ENCODE measurements at regions of chr5 and their contacts with region 1.

Region 1: GRCh38 chr5:138641547-138642298 is 66.5 kb upstream of the HSPA9 start:
- DNase-seq: peak; percentile 69 to 80 (median 78)
- ATAC-seq: peak; percentile 93
- H3K4me3 ChIP-seq: no peak overlapping the region
- H3K27ac ChIP-seq: no peak overlapping the region
- H3K4me1 ChIP-seq: peaks cover 2 to 3% of the 10 kb centered on the region in 2 experiments; a peak in 2 of 5 replicates
- H3K27me3 ChIP-seq: peaks cover 31 to 66% of the 10 kb centered on the region in 2 experiments
- CTCF ChIP-seq: peak; percentile 82 to 94 (median 90)
- EP300 ChIP-seq: peak; percentile 33; the same call in 1 of the 2 replicates
- POLR2A ChIP-seq: no peak
- RAD21 ChIP-seq: peak; percentile 59 to 86

Region 2: DNA sequence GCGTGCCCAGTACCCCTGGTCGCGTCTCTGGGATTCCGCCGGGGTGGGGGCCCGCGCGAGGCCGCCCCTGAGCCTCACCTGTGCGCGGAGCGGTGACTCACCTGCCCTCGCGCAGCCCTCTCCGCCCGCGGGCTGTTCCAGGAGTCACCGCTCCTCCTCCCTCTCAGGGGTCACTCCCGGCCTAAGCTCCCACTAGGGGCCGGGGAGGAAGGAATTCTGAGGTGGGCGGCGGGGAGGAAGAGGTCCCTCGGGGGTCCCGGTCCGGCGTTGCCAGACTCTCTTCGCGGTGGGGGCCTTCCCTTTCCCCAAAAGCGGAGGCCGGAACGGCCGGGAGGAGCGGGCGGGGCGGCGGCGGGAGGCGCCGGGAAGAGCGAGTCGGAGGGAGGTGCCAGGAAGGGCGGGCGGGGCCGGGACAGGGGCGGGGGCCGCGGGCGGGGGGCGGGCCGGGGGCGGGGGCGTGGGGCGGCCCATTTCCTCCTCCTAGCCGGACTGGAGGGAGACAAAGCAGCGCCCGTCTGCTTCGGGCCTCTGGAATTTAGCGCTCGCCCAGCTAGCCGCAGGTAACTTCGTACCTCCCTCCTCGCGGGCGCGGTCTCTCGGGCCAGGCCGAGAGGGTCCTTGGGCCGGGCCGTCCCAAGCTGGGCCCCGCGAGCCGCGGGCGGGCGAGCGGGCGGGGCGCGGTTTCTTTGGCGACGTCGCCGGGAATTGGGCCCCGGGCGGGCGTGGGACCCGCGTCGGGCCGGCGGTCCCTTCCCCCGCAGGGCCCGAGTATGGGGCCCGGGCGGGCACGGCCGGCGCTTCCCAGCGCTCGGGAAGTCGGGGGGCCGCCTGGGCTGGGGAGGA is 111.4 kb after region 1 on chr5 and contains the start of gene CTNNA1:
- CTCF ChIA-PET with region 1: no interaction called
- POLR2A ChIA-PET with region 1: interaction called, 3 read pairs
- in situ Hi-C with region 1: no loop called
- intact Hi-C with region 1: loop called (anchors 5 kb)
- DNase-seq: peak; percentile 79 to 94 (median 93)
- ATAC-seq: peak; percentile 77
- H3K4me3 ChIP-seq: peak within 1 kb of the TSS; percentile 98
- H3K27ac ChIP-seq: peak within 1 kb of the TSS; percentile 91
- H3K4me1 ChIP-seq: peaks cover 15 to 21% of the 10 kb centered on the region in 2 experiments; a peak in 4 of 5 replicates
- H3K27me3 ChIP-seq: no peaks in the 10 kb centered on the region
- CTCF ChIP-seq: no peak
- EP300 ChIP-seq: peak; percentile 95
- POLR2A ChIP-seq: peak; percentile 55
- RAD21 ChIP-seq: no peak
- polyA plus RNA-seq, gene CTNNA1: 72.8 to 76.5 TPM

Region 3: DNA sequence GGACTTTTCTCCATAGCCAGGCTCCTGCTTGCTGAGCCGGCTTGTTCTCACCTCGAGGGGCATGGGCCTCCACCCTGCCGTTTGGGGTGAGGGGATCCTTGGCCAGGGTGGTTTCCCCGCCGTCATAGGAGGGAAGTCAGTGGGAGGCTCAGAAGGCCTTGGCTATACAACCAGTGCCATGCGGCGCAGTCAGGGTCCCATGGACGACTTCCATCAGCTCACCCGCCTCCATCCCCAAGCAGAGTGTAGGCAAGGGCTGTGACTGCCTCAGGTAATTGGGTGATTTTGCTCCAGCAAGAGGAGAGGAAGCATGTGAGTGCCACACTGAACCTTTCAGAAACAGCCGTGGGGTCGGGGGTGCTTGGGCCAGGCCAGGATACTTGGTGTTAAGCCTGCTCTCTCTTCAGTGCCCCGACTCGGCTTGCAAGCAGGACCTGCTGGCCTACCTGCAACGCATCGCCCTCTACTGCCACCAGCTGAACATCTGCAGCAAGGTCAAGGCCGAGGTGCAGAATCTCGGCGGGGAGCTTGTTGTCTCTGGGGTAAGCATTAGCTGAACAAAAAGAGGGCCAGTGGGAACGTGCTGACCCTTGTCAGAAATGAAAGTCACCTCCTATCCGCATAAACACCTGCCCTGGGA is 290.6 kb after region 1 on chr5:
- CTCF ChIA-PET with region 1: no interaction called
- POLR2A ChIA-PET with region 1: no interaction called
- in situ Hi-C with region 1: no loop called
- intact Hi-C with region 1: loop called (anchors 10 kb)
- DNase-seq: no peak
- ATAC-seq: peak; percentile 28
- H3K4me3 ChIP-seq: no peak overlapping the region
- H3K27ac ChIP-seq: no peak overlapping the region; the same call in 2 of the 3 replicates
- H3K4me1 ChIP-seq: peaks cover 0 to 1% of the 10 kb centered on the region in 2 experiments; a peak in 1 of 5 replicates
- H3K27me3 ChIP-seq: no peaks in the 10 kb centered on the region
- CTCF ChIP-seq: peak in 2 of 3 experiments; percentile 21 to 28; a peak in 2 of 6 replicates
- EP300 ChIP-seq: no peak
- POLR2A ChIP-seq: no peak
- RAD21 ChIP-seq: peak in 1 of 2 experiments; percentile 32; a peak in 1 of 4 replicates

Region 4: GRCh38 chr5:139137702-139138101 is 496.0 kb after region 1 on chr5:
- CTCF ChIA-PET with region 1: no interaction called
- POLR2A ChIA-PET with region 1: no interaction called
- in situ Hi-C with region 1: no loop called
- intact Hi-C with region 1: loop called (anchors 5 kb)
- DNase-seq: peak; percentile 22 to 39 (median 24)
- ATAC-seq: peak; percentile 77
- H3K4me3 ChIP-seq: no peak overlapping the region
- H3K27ac ChIP-seq: no peak overlapping the region
- H3K4me1 ChIP-seq: peaks cover 0 to 8% of the 10 kb centered on the region in 2 experiments; a peak in 1 of 5 replicates
- H3K27me3 ChIP-seq: no peaks in the 10 kb centered on the region
- CTCF ChIP-seq: peak; percentile 44 to 48 (median 48)
- EP300 ChIP-seq: no peak
- POLR2A ChIP-seq: no peak
- RAD21 ChIP-seq: peak in 1 of 2 experiments; percentile 61; a peak in 2 of 4 replicates